Activated T-helper 1 cell treated with anti-CD3 and anti-CD28 coated beads, Interleukin-12 subunit alpha, Interleukin-12 subunit beta, Interleukin-2, Interleukin-4 antibody, amounts not matched to agents 30 ng/mL and 10 ng/mL and 1 ng/mL, durations not matched to agents 14 hours and 24 hours and 36 hours (primary cell): ENCODE measurements at regions of chr6 and their contacts with region 1.

Region 1: GRCh38 chr6:7615611-7616383 is 25.8 kb downstream of the SNRNP48 start:
- DNase-seq: no peak
- H3K4me3 Mint-ChIP-seq: no peak overlapping the region
- H3K27ac Mint-ChIP-seq: no peak overlapping the region
- H3K4me1 Mint-ChIP-seq: peaks cover 18% of the 10 kb centered on the region
- H3K27me3 Mint-ChIP-seq: peaks cover 3% of the 10 kb centered on the region

Region 2: DNA sequence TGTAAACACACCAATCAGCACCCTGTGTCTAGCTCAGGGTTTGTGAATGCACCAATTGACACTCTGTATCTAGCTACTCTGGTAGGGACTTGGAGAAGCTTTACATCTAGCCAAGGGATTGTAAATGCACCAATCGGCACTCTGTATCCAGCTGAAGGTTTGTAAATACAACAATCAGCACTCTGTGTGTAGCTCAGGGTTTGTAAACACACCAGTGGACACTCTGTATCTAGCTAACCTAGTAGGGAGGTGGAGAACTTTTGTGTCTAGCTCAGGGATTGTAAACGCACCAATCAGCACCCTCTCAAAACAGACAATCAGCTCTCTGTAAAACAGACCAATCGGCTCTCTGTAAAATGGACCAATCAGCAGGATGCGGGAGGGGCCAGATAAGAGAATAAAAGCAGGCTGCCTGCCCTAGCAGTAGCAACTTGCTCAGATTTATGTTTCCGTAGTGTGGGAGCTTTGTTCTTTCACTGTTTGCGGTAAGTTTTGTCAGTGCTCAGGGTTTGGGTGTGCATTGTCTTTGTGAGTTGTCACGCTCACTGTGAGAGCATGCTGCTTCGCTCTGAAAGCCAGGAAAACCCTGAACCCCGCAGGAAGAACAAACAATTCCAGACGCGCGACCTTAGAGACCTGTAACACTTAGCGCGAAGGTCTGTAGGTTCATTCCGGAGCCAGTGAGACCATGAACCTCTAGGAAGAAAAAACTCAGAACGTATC is 189.2 kb before region 1 on chr6:
- intact Hi-C with region 1: loop called (anchors 2 kb)
- DNase-seq: no peak
- H3K4me3 Mint-ChIP-seq: no peak overlapping the region
- H3K27ac Mint-ChIP-seq: no peak overlapping the region
- H3K4me1 Mint-ChIP-seq: no peaks in the 10 kb centered on the region
- H3K27me3 Mint-ChIP-seq: no peaks in the 10 kb centered on the region

Region 3: GRCh38 chr6:7707787-7708186 is 92.0 kb after region 1 on chr6:
- intact Hi-C with region 1: no loop called
- DNase-seq: no peak
- H3K4me3 Mint-ChIP-seq: no peak overlapping the region
- H3K27ac Mint-ChIP-seq: no peak overlapping the region
- H3K4me1 Mint-ChIP-seq: no peaks in the 10 kb centered on the region
- H3K27me3 Mint-ChIP-seq: no peaks in the 10 kb centered on the region